Breast epithelium (tissue), 4 donors: ENCODE measurements at regions of chr10 and their contacts with region 1.

Region 1: DNA sequence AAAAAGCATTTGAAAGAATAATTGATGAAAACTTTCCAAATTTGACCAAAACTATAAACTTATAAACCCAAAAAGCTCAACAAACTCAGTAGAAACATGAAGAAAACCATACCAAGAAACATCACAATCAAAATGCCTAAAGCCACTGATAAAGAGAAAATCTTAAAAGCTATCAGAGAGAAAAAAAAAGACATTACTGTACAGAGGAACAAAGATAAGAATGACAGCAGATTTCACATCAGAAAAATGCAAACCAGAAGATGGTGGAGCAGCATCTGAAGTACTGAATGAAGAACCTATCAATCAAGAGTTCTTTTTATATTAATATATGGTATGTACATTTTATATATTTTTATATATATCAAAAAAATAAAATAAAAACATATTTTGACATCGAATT is 2.4 kb upstream of the GPAM start:
- DNase-seq: no peak
- H3K4me3 ChIP-seq: no peak overlapping the region
- H3K27ac ChIP-seq: no peak overlapping the region
- H3K4me1 ChIP-seq: peaks cover 0 to 5% of the 10 kb centered on the region in 2 donors
- H3K27me3 ChIP-seq: no peaks in the 10 kb centered on the region
- CTCF ChIP-seq: no peak
- POLR2A ChIP-seq: no peak

Region 2: DNA sequence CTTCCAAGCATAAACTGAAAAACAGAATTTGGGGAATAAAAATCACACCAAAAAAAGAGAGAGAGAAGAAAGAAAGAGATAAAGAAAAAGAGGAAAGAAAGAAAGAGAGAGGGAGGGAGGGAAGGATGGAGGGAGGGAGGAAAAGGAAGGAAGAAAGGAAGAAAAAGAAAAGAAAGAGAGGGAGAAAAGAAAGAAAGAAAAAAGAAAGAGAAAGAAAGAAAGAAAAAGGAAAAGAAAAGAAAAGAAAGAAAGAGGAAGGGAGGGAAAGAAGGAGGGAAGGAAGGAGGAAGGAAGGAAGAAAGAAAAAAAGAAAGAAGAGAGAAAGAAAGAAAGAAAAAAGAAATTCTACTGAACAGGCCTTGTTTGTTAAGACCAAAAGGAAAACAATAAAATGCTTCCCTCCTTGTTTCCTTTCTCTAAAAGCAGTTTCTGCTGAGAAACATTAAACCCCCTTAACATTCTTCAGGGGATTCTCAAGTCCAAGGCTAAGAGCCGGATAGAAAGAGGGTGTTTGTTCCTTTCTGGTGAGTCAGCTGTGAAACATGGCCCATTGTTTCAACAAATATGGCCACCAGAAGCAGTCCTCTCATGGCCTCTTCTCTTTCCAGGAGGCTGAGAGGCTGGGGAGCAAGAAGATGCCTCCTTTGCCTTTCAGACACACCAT is 44.5 kb after region 1 on chr10:
- intact Hi-C with region 1: loop called (anchors 2 kb)
- DNase-seq: no peak
- H3K4me3 ChIP-seq: no peak overlapping the region
- H3K27ac ChIP-seq: no peak overlapping the region
- H3K4me1 ChIP-seq: no peaks in the 10 kb centered on the region
- H3K27me3 ChIP-seq: no peaks in the 10 kb centered on the region
- CTCF ChIP-seq: no peak
- POLR2A ChIP-seq: no peak